PC-9 (cell line): ENCODE measurements at regions of chr3 and their contacts with region 1.

Region 1: GRCh38 chr3:152574461-152575079 is 260.4 kb upstream of the P2RY1 start:
- DNase-seq: peak in 1 of 2 experiments; percentile 46
- H3K4me3 ChIP-seq: no peak overlapping the region
- H3K27ac ChIP-seq: no peak overlapping the region
- H3K4me1 ChIP-seq: no peaks in the 10 kb centered on the region
- H3K27me3 ChIP-seq: no peaks in the 10 kb centered on the region
- CTCF ChIP-seq: peak; percentile 74

Region 2: GRCh38 chr3:151227807-151228665 is 1346.5 kb before region 1 on chr3:
- CTCF ChIA-PET with region 1: no interaction called
- POLR2A ChIA-PET with region 1: no interaction called
- intact Hi-C with region 1: loop called (anchors 1 kb)
- DNase-seq: peak; percentile 68 to 75
- H3K4me3 ChIP-seq: no peak overlapping the region
- H3K27ac ChIP-seq: peak overlapping the region; percentile 40
- H3K4me1 ChIP-seq: peaks cover 28% of the 10 kb centered on the region
- H3K27me3 ChIP-seq: no peaks in the 10 kb centered on the region
- CTCF ChIP-seq: peak; percentile 98

Region 3: DNA sequence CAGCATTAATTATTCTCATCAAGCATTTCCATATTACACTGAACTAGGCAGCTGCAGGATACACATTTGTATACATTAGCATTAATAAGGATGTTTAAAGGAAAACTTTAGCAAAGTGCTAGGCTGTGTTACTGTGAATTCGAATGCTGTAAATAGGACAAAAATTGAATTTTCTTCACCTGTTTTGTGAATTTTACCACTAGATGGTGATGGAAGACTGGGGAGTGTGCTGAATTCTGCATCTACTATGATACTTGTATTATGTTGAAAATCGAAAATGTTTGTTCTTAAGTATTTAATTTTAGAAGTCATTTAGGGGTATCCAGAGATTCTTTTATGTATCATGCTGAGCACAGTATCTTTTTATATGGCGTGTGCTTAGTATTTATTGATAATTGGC is 1283.9 kb before region 1 on chr3:
- CTCF ChIA-PET with region 1: no interaction called
- POLR2A ChIA-PET with region 1: no interaction called
- intact Hi-C with region 1: loop called (anchors 1 kb)
- DNase-seq: peak in 1 of 2 experiments; percentile 46
- H3K4me3 ChIP-seq: no peak overlapping the region
- H3K27ac ChIP-seq: no peak overlapping the region
- H3K4me1 ChIP-seq: no peaks in the 10 kb centered on the region
- H3K27me3 ChIP-seq: no peaks in the 10 kb centered on the region
- CTCF ChIP-seq: peak; percentile 88

Region 4: DNA sequence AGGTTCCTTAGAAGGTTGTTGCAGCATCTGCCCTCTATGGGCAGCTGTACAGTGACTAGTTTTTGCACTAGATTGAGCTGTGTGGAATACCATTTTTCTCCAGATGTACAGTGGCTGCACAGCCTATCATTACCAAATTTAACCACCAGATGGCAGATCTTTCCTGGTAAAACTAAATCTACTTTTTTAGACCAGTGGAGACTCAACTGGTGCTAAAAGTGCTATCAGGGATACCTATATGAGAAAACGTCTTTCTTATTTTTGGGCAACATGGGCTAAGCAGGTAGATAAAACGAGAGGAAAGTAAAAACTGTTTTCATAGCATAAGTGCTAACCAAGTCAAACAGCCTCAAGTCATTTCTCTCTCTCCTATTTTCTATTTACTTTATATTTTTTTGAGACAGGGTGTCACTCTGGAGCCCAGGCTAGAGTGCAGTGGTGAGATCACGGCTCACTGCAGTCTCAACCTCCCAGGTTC is 1134.9 kb before region 1 on chr3:
- CTCF ChIA-PET with region 1: no interaction called
- POLR2A ChIA-PET with region 1: no interaction called
- intact Hi-C with region 1: loop called (anchors 5 kb)
- DNase-seq: peak; percentile 40 to 55
- H3K4me3 ChIP-seq: no peak overlapping the region
- H3K27ac ChIP-seq: no peak overlapping the region
- H3K4me1 ChIP-seq: peaks cover under 1% of the 10 kb centered on the region; the same call in 1 of the 2 replicates
- H3K27me3 ChIP-seq: no peaks in the 10 kb centered on the region
- CTCF ChIP-seq: peak; percentile 91

Region 5: GRCh38 chr3:152471814-152472671 is 102.5 kb before region 1 on chr3:
- CTCF ChIA-PET with region 1: no interaction called
- POLR2A ChIA-PET with region 1: no interaction called
- intact Hi-C with region 1: loop called (anchors 10 kb)
- DNase-seq: peak in 1 of 2 experiments; percentile 25
- H3K4me3 ChIP-seq: no peak overlapping the region
- H3K27ac ChIP-seq: no peak overlapping the region
- H3K4me1 ChIP-seq: no peaks in the 10 kb centered on the region
- H3K27me3 ChIP-seq: no peaks in the 10 kb centered on the region
- CTCF ChIP-seq: peak; percentile 61

Region 6: DNA sequence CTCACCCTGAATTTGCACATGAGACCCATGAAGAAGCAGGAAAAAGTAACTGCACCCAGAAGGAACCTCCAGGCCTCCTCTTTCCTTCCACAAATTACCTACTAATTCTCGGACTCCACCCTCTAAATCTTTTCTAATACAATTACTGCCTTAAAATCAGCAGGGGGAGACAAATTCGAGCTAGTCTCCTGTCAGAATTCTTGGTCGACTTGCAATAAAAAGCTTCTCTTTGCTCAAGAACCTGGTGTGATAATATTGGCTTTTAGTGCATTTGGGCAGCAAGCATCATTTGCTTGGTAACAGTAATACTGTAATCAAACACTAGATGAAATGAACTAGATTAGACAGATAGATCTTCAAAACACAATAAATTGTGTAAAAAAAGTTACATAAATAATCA is 869.4 kb after region 1 on chr3:
- CTCF ChIA-PET with region 1: interaction called, 15 read pairs
- POLR2A ChIA-PET with region 1: no interaction called
- intact Hi-C with region 1: no loop called
- DNase-seq: no peak
- H3K4me3 ChIP-seq: no peak overlapping the region
- H3K27ac ChIP-seq: no peak overlapping the region
- H3K4me1 ChIP-seq: no peaks in the 10 kb centered on the region
- H3K27me3 ChIP-seq: no peaks in the 10 kb centered on the region
- CTCF ChIP-seq: no peak; the same call in 1 of the 2 replicates